Breast epithelium (tissue), 4 donors: ENCODE measurements at regions of chr17 and their contacts with region 1.

Region 1: DNA sequence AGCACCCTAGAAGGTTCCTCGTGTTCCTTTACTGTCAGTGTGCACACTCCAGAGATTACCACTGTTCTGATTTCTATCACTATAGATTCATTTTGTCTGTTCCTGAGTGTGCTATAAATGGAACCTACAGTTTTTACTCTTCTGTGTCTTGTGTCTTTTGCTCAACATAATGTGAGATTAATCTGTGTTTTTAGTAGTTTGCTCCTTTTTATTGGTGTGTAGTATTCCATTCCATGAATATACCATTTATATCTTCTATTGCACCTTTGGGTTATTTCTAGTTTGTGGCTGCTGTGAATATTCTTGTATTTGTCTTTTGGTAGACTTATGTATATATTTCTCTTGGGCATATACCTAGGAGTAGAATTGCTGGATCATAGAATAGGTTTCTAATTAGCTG is 68.2 kb downstream of the AP2B1 start:
- DNase-seq: no peak
- H3K4me3 ChIP-seq: no peak overlapping the region
- H3K27ac ChIP-seq: no peak overlapping the region
- H3K4me1 ChIP-seq: no peaks in the 10 kb centered on the region
- H3K27me3 ChIP-seq: no peaks in the 10 kb centered on the region
- CTCF ChIP-seq: no peak
- POLR2A ChIP-seq: no peak

Region 2: GRCh38 chr17:35238821-35239220 is 416.5 kb before region 1 on chr17:
- intact Hi-C with region 1: loop called (anchors 5 kb)
- DNase-seq: no peak
- H3K4me3 ChIP-seq: no peak overlapping the region
- H3K27ac ChIP-seq: no peak overlapping the region
- H3K4me1 ChIP-seq: no peaks in the 10 kb centered on the region
- H3K27me3 ChIP-seq: no peaks in the 10 kb centered on the region
- CTCF ChIP-seq: no peak
- POLR2A ChIP-seq: no peak

Region 3: DNA sequence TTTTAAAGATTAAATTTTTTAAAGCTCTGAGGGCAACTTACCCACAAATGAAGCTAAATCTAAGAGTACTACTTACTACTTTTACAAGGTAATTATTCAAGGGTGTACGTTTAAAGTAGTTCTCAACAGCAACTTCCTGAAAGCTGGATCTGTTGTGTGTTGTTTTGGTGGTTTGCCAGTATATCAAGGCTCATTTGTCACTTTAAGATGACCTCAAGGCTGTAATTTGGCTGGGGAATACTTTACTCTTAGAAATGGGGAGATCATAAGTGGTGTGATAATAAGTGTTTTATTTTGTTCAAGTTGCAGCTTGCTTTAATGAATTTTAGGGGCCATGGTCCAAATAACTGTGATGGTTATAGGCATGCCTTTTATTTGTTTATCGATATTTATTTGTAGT is 37.8 kb before region 1 on chr17:
- intact Hi-C with region 1: loop called (anchors 5 kb)
- DNase-seq: no peak
- H3K4me3 ChIP-seq: no peak overlapping the region
- H3K27ac ChIP-seq: no peak overlapping the region
- H3K4me1 ChIP-seq: no peaks in the 10 kb centered on the region
- H3K27me3 ChIP-seq: no peaks in the 10 kb centered on the region
- CTCF ChIP-seq: no peak
- POLR2A ChIP-seq: no peak